Activated B cell treated with CpG ODN at 0.5 μM for 24 hours (primary cell): ENCODE measurements at regions of chr14 and their contacts with region 1.

Region 1: DNA sequence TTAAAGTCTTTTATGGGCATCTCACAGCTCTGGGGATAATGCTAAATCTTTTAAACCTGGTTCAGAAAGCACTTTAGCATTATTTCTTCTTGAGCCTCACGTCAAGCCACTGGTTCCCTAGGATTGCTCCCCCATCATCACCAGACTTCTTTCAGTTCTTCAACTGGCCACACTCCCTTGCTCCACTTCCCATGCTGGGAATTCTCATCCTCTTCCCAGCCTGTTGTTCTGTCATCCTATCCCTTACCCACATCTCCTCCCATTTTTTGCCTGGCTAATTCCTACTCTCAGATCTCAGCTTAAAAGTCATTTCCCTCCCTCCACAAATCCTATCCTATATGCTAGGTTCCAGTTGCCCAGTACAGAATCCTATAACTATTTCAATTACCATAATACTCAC is 14.4 kb downstream of the FERMT2 start:
- DNase-seq: no peak
- ATAC-seq: no peak
- H3K4me3 Mint-ChIP-seq: no peak overlapping the region
- H3K27ac Mint-ChIP-seq: no peak overlapping the region
- H3K4me1 Mint-ChIP-seq: no peaks in the 10 kb centered on the region
- H3K27me3 Mint-ChIP-seq: peaks cover 9% of the 10 kb centered on the region
- CTCF ChIP-seq: no peak

Region 2: GRCh38 chr14:51979088-51979709 is 957.2 kb before region 1 on chr14:
- CTCF ChIA-PET with region 1: no interaction called
- POLR2A ChIA-PET with region 1: no interaction called
- intact Hi-C with region 1: no loop called
- DNase-seq: peak; percentile 68
- ATAC-seq: peak; percentile 75
- H3K4me3 Mint-ChIP-seq: no peak overlapping the region
- H3K27ac Mint-ChIP-seq: no peak overlapping the region
- H3K4me1 Mint-ChIP-seq: peaks cover 6% of the 10 kb centered on the region
- H3K27me3 Mint-ChIP-seq: no peaks in the 10 kb centered on the region
- CTCF ChIP-seq: peak; percentile 37

Region 3: DNA sequence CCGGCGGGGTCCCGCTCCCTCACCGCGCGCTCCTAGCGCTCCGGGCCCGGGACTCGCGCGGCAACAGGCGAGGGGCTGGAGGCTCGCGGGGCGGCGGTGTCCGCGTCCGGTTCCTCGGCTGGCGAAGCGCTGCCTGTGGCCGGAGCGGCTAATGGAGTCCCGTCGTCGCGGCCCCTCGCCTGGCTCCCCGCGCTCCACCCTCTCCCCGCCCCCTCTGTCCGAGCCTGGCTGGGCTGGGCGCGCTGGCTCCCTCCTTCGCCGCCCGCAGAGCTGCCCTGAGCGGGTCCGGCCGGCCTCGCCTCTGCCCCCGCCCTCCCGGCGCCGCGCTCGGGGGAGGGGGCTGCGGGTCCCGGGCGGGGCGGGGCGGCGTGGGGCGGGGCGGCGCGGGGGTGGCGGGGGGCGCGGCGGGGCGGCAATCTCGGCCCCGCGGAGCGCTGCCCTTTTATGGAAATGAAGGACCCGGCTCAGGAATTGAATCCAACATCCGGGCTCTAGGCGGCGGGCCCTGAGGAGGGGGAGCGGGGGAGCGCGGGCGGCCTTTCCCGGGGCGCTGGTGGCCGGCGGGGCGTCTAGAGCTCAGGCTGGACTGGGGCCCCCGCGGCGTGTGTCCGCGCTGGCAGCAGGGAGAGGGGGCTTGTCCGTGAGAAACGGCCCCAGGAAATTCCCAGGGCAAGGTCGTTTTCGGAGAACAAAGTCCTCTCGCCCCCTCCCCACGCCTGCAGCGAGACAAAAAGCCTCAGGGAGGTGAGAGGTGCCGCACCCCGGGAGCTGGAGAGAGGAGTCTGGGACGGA is 14.7 kb after region 1 on chr14 and contains the start of gene FERMT2:
- CTCF ChIA-PET with region 1: no interaction called
- POLR2A ChIA-PET with region 1: no interaction called
- intact Hi-C with region 1: loop called (anchors 2 kb)
- DNase-seq: peak; percentile 24
- ATAC-seq: peak; percentile 56
- H3K4me3 Mint-ChIP-seq: peak within 1 kb of the TSS; percentile 84
- H3K27ac Mint-ChIP-seq: no peak within 1 kb of the TSS
- H3K4me1 Mint-ChIP-seq: peaks cover 21% of the 10 kb centered on the region
- H3K27me3 Mint-ChIP-seq: peaks cover 42% of the 10 kb centered on the region
- CTCF ChIP-seq: no peak
- total RNA-seq, gene FERMT2: 0.24 and 0.51 TPM in 2 replicates